ENCODE measurements at regions of chr4 and their contacts with region 1.

Region 1: GRCh38 chr4:22253431-22253830 is 262.4 kb downstream of the ADGRA3 start:
- DNase-seq: no peak
- ATAC-seq: no peak
- H3K4me3 ChIP-seq: no peak overlapping the region
- H3K27ac ChIP-seq: no peak overlapping the region
- H3K4me1 ChIP-seq: no peaks in the 10 kb centered on the region
- H3K27me3 ChIP-seq: no peaks in the 10 kb centered on the region
- CTCF ChIP-seq: no peak
- EP300 ChIP-seq: no peak
- POLR2A ChIP-seq: no peak
- RAD21 ChIP-seq: no peak

Region 2: GRCh38 chr4:21780158-21780557 is 473.3 kb before region 1 on chr4:
- CTCF ChIA-PET with region 1: no interaction called
- POLR2A ChIA-PET with region 1: no interaction called
- in situ Hi-C with region 1: no loop called
- intact Hi-C with region 1: loop called (anchors 10 kb)
- DNase-seq: no peak
- ATAC-seq: no peak
- H3K4me3 ChIP-seq: no peak overlapping the region
- H3K27ac ChIP-seq: no peak overlapping the region
- H3K4me1 ChIP-seq: peaks cover 10% of the 10 kb centered on the region
- H3K27me3 ChIP-seq: no peaks in the 10 kb centered on the region; a peak in 1 of 5 replicates
- CTCF ChIP-seq: no peak
- EP300 ChIP-seq: no peak
- POLR2A ChIP-seq: no peak
- RAD21 ChIP-seq: no peak

Region 3: GRCh38 chr4:21992330-21992729 is 261.1 kb before region 1 on chr4:
- CTCF ChIA-PET with region 1: no interaction called
- POLR2A ChIA-PET with region 1: no interaction called
- in situ Hi-C with region 1: no loop called
- intact Hi-C with region 1: no loop called
- DNase-seq: no peak
- ATAC-seq: no peak
- H3K4me3 ChIP-seq: no peak overlapping the region
- H3K27ac ChIP-seq: no peak overlapping the region
- H3K4me1 ChIP-seq: no peaks in the 10 kb centered on the region
- H3K27me3 ChIP-seq: no peaks in the 10 kb centered on the region; a peak in 1 of 5 replicates
- CTCF ChIP-seq: no peak
- EP300 ChIP-seq: no peak
- POLR2A ChIP-seq: no peak
- RAD21 ChIP-seq: no peak

Region 4: DNA sequence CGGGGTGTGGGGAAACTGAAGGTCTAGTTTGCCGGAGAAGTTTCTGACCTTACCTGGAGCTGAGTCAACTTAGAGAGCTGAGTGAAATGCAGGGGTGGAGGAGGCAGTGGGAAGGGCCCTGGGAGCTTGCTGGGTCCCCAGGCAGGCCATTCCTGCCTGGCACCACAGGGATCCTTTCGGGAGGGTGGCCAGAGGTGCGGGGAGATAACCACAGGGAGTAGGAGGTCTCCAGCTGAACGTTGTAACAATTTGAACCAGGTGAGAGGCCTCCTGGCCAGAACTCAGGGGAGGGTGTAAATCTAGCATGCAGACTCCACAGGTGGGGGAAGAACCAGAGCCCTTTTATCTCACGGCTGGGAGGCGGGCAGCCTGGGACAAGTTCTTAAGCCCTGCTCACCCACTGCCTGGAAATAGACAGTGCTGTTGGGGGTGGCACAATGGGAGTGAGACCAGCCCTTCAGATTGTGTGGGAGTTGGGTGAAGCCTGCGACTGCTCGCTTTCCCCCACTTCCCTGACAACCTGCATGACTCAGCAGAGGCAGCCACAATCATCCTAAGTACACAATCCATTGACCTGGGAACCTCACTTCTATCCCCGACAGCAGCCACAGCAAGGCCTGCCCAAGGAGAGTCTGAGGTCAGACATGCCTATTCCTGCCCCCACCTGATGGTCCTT is 15.1 kb after region 1 on chr4:
- CTCF ChIA-PET with region 1: no interaction called
- POLR2A ChIA-PET with region 1: no interaction called
- in situ Hi-C with region 1: no loop called
- intact Hi-C with region 1: no loop called
- DNase-seq: peak; percentile 16
- ATAC-seq: peak; percentile 80
- H3K4me3 ChIP-seq: no peak overlapping the region
- H3K27ac ChIP-seq: no peak overlapping the region
- H3K4me1 ChIP-seq: 0 out of 2 replicates have a peak, but pooled peaks cover 10% of the 10 kb centered on the region
- H3K27me3 ChIP-seq: no peaks in the 10 kb centered on the region
- CTCF ChIP-seq: no peak
- EP300 ChIP-seq: no peak
- POLR2A ChIP-seq: no peak
- RAD21 ChIP-seq: no peak